HEK293T (cell line): ENCODE measurements at regions of chr1 and their contacts with region 1.

Region 1: GRCh38 chr1:20574686-20575540 is 14.0 kb upstream of the CDA start:
- DNase-seq: peak; percentile 88

Region 2: GRCh38 chr1:20589331-20590278 is 14.7 kb after region 1 on chr1:
- CTCF ChIA-PET with region 1: interaction called, 13 read pairs
- POLR2A ChIA-PET with region 1: no interaction called
- DNase-seq: peak; percentile 42